ENCODE measurements at regions of chr7 and their contacts with region 1.

Region 1: DNA sequence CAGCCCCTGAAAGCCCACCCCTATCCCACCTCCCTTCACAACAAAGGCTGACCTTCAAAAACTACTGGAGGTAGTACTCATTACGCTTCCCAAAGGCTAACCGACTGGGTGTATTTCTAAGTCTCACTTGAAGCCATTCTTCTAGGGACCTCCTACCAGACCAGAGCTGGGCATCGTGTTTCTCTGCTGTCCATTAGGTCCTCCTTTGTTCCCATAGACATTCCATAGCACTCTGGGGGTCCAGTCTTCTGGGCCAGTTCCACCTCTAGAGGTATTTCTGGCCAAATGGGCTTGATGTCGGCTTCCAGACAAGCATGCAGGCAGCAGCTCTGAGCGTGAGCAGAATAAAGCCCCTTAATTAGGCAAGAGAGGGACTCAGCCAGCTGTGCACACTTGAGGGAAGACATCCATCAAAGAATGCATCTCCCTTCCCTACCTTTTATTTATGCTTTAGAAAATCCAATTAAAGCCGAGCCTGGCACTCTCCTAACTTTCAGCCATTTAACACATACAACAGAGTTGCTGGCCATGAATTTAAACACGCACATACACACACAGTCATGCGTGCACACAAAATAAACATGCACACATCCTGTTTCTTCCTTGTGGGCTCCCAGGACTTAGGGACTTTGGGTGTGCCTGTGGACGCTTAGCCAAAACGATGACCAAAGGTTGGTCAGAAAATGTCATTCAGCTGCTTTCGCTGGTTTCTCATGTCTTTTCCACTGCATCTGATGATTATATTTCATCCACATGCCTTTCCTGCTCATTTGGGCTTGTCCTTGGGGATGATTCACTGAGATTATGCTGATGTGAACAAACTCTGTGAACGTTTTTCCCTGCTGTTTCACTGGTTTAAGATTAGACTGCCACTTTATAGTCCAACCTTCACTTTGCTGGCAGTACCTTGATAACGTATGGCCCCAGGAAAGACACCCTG is 362.0 kb upstream of the NFE2L3 start:
- DNase-seq: no peak
- H3K4me3 ChIP-seq: no peak overlapping the region
- H3K27ac ChIP-seq: no peak overlapping the region
- H3K4me1 ChIP-seq: peaks cover 6% of the 10 kb centered on the region
- H3K27me3 ChIP-seq: no peaks in the 10 kb centered on the region
- CTCF ChIP-seq: no peak
- EP300 ChIP-seq: no peak
- POLR2A ChIP-seq: no peak

Region 2: GRCh38 chr7:25731068-25731845 is 58.7 kb before region 1 on chr7:
- intact Hi-C with region 1: loop called in 1 of 4 experiments (anchors 10 kb)
- DNase-seq: no peak
- H3K4me3 ChIP-seq: no peak overlapping the region
- H3K27ac ChIP-seq: peak overlapping the region in 1 of 2 donors; percentile 59
- H3K4me1 ChIP-seq: peaks cover 8% of the 10 kb centered on the region
- H3K27me3 ChIP-seq: no peaks in the 10 kb centered on the region
- CTCF ChIP-seq: no peak
- EP300 ChIP-seq: no peak
- POLR2A ChIP-seq: no peak

Region 3: GRCh38 chr7:25940086-25940906 is 150.3 kb after region 1 on chr7:
- intact Hi-C with region 1: no loop called
- DNase-seq: no peak
- H3K4me3 ChIP-seq: no peak overlapping the region
- H3K27ac ChIP-seq: no peak overlapping the region
- H3K4me1 ChIP-seq: no peaks in the 10 kb centered on the region
- H3K27me3 ChIP-seq: no peaks in the 10 kb centered on the region
- CTCF ChIP-seq: no peak
- EP300 ChIP-seq: no peak
- POLR2A ChIP-seq: no peak